ENCODE measurements at regions of chr1 and their contacts with region 1.

Region 1: GRCh38 chr1:21904704-21905520 is 32.2 kb downstream of the HSPG2 start:
- DNase-seq: no peak
- H3K4me3 ChIP-seq: peak overlapping the region in 1 of 4 donors; percentile 12
- H3K27ac ChIP-seq: peak overlapping the region; percentile 93 to 99 (median 98)
- H3K4me1 ChIP-seq: peaks cover 100% of the 10 kb centered on the region in 4 donors
- H3K27me3 ChIP-seq: no peaks in the 10 kb centered on the region
- CTCF ChIP-seq: no peak
- EP300 ChIP-seq: peak; percentile 65
- POLR2A ChIP-seq: no peak

Region 2: DNA sequence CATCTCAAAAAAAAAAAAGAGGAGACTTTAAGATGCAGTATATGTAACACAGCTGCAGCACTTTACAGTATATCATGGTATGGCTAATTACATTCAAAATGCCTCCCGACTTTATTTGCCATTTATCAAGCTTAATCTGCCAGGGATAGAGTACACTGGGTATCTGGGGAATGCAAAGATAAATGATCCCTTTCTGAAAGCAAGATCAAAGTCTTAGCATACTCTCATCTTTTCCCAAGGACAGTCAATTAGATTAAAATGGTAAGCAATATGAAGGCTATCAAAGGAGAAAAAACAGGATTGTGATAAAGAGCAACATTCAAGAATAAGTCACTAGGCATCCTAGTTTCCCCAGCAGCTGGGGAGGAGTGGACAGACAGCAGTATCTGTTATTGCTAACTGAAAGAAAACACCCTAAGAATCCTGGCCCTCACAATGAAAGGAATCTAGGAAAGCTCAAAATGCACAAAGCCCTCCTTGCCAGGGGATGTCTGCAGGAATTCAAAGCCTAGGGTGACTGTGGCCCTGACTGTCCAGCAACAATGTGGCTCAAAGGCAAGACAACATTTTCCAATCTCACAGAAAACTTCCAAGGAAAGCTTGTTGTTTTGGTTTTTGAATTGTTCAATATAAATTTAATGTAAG is 179.0 kb before region 1 on chr1:
- intact Hi-C with region 1: no loop called
- DNase-seq: no peak
- H3K4me3 ChIP-seq: no peak overlapping the region
- H3K27ac ChIP-seq: no peak overlapping the region
- H3K4me1 ChIP-seq: no peaks in the 10 kb centered on the region
- H3K27me3 ChIP-seq: no peaks in the 10 kb centered on the region
- CTCF ChIP-seq: no peak
- EP300 ChIP-seq: no peak
- POLR2A ChIP-seq: no peak

Region 3: GRCh38 chr1:21937372-21938221 is 32.7 kb after region 1 on chr1:
- intact Hi-C with region 1: loop called (anchors 5 kb)
- DNase-seq: no peak
- H3K4me3 ChIP-seq: peak overlapping the region; percentile 77 to 95 (median 88)
- H3K27ac ChIP-seq: peak overlapping the region; percentile 92 to 98 (median 94)
- H3K4me1 ChIP-seq: peaks cover 76 to 89% (median 86%) of the 10 kb centered on the region in 4 donors
- H3K27me3 ChIP-seq: no peaks in the 10 kb centered on the region
- CTCF ChIP-seq: no peak
- EP300 ChIP-seq: no peak
- POLR2A ChIP-seq: no peak

Region 4: GRCh38 chr1:22105611-22106207 is 200.8 kb after region 1 on chr1:
- intact Hi-C with region 1: no loop called
- DNase-seq: no peak
- H3K4me3 ChIP-seq: no peak overlapping the region
- H3K27ac ChIP-seq: no peak overlapping the region
- H3K4me1 ChIP-seq: peaks cover 13 to 62% (median 38%) of the 10 kb centered on the region in 4 donors
- H3K27me3 ChIP-seq: no peaks in the 10 kb centered on the region
- CTCF ChIP-seq: peak; percentile 72 to 79 (median 76)
- EP300 ChIP-seq: no peak
- POLR2A ChIP-seq: no peak